ENCODE measurements at regions of chr4 and their contacts with region 1.

Region 1: GRCh38 chr4:4430492-4431197 is 43.7 kb downstream of the NSG1 start:
- DNase-seq: peak; percentile 92
- ATAC-seq: peak; percentile 97
- H3K4me3 ChIP-seq: no peak overlapping the region
- H3K27ac ChIP-seq: no peak overlapping the region
- H3K4me1 ChIP-seq: peaks cover 4% of the 10 kb centered on the region; the same call in 1 of the 2 replicates
- H3K27me3 ChIP-seq: no peaks in the 10 kb centered on the region
- CTCF ChIP-seq: peak; percentile 70
- POLR2A ChIP-seq: no peak
- RAD21 ChIP-seq: peak; percentile 63

Region 2: DNA sequence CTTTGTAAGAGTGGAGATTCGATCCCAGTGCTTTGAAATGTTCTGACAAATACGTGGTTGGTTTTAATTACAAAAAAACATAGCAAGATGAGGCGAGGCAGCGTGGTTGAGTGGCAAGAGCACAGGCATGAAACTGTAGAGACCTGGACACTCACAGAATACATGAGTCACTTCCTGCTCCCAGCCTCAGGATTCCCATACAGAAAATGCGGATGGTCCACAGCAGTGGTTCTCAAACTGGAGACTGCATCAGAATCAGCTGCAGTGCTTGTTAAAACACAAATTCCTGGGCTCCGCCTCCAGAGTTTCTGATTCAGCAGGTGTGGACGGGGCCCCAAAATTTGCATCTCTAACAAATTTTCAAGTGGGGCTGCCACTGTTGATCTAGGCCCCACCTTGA is 214.0 kb before region 1 on chr4:
- CTCF ChIA-PET with region 1: no interaction called
- POLR2A ChIA-PET with region 1: no interaction called
- dilution Hi-C with region 1: no loop called
- in situ Hi-C with region 1: no loop called
- intact Hi-C with region 1: no loop called
- DNase-seq: peak; percentile 59
- ATAC-seq: no peak
- H3K4me3 ChIP-seq: no peak overlapping the region
- H3K27ac ChIP-seq: no peak overlapping the region
- H3K4me1 ChIP-seq: 0 out of 2 replicates have a peak, but pooled peaks cover 2% of the 10 kb centered on the region
- H3K27me3 ChIP-seq: peaks cover 4% of the 10 kb centered on the region; the same call in 1 of the 2 replicates
- CTCF ChIP-seq: no peak
- POLR2A ChIP-seq: no peak
- RAD21 ChIP-seq: no peak

Region 3: DNA sequence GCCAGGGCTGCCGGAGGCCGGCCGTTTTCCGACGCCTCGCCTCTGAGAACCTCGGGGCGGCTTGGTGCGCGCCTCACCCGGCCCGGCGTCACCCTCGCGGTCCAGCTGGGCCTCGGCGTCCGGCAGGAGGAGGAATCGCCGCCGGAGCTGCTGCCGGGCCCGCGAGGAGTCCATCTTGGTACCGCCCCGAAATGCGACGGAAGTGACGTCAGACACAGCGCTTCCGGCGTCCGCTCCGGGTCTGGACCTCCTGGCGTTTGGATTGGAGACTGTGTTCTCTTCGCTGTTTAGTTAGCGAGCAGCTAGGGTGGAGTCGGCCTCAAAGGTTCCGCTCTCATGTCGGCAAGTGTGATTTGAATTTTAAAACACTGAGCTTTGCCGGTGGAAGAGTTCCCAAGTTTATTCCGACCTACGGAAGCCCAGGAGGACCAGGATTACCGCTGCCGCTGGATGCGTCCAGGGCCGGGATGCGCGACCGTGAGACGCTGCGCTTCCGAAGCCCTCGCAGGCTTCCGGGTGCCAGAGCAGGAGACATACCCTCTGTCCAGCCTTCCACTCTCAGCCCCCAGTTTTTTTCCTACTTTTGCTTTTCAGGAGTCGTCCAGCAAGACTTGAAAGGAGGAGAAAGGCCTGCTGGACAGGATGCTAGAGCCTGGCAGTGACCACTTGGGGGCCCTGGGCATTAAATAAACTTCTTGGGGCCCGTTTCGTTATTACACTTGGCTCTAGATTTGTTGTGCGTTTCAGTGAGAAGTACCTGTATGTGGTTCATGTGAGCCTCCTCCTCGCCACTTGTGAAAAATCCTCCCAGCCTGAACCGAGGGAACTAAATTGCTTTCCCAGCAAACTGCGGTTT is 182.4 kb before region 1 on chr4 and contains the start of gene TMEM128:
- CTCF ChIA-PET with region 1: interaction called, 3 read pairs
- POLR2A ChIA-PET with region 1: no interaction called
- dilution Hi-C with region 1: no loop called
- in situ Hi-C with region 1: no loop called
- intact Hi-C with region 1: loop called (anchors 1 kb)
- DNase-seq: peak; percentile 93
- ATAC-seq: peak; percentile 95
- H3K4me3 ChIP-seq: peak within 1 kb of the TSS; percentile 90
- H3K27ac ChIP-seq: peak within 1 kb of the TSS; percentile 96
- H3K4me1 ChIP-seq: peaks cover 2% of the 10 kb centered on the region; the same call in 1 of the 2 replicates
- H3K27me3 ChIP-seq: no peaks in the 10 kb centered on the region
- CTCF ChIP-seq: 0 out of 2 replicates have a peak, but pooled peaks have one; percentile 7
- POLR2A ChIP-seq: peak; percentile 92
- RAD21 ChIP-seq: no peak
- total RNA-seq, gene TMEM128: 21.9 and 27.2 TPM in 2 replicates

Region 4: GRCh38 chr4:4260253-4260652 is 170.4 kb before region 1 on chr4:
- CTCF ChIA-PET with region 1: interaction called, 4 read pairs
- POLR2A ChIA-PET with region 1: no interaction called
- dilution Hi-C with region 1: no loop called
- in situ Hi-C with region 1: no loop called
- intact Hi-C with region 1: loop called (anchors 2 kb)
- DNase-seq: peak; percentile 63
- ATAC-seq: peak; percentile 94
- H3K4me3 ChIP-seq: no peak overlapping the region
- H3K27ac ChIP-seq: no peak overlapping the region
- H3K4me1 ChIP-seq: peaks cover 1% of the 10 kb centered on the region; the same call in 1 of the 2 replicates
- H3K27me3 ChIP-seq: peaks cover 16% of the 10 kb centered on the region
- CTCF ChIP-seq: peak; percentile 59
- POLR2A ChIP-seq: no peak
- RAD21 ChIP-seq: peak; percentile 60

Region 5: GRCh38 chr4:4296283-4296846 is 134.3 kb before region 1 on chr4:
- CTCF ChIA-PET with region 1: no interaction called
- POLR2A ChIA-PET with region 1: no interaction called
- dilution Hi-C with region 1: no loop called
- in situ Hi-C with region 1: no loop called
- intact Hi-C with region 1: no loop called
- DNase-seq: no peak
- ATAC-seq: no peak
- H3K4me3 ChIP-seq: no peak overlapping the region
- H3K27ac ChIP-seq: no peak overlapping the region
- H3K4me1 ChIP-seq: no peaks in the 10 kb centered on the region
- H3K27me3 ChIP-seq: no peaks in the 10 kb centered on the region
- CTCF ChIP-seq: no peak
- POLR2A ChIP-seq: no peak
- RAD21 ChIP-seq: no peak

Region 6: GRCh38 chr4:4395849-4396637 is 34.6 kb before region 1 on chr4:
- CTCF ChIA-PET with region 1: interaction called, 3 read pairs
- POLR2A ChIA-PET with region 1: no interaction called
- dilution Hi-C with region 1: no loop called
- in situ Hi-C with region 1: no loop called
- intact Hi-C with region 1: loop called (anchors 2 kb)
- DNase-seq: peak; percentile 53
- ATAC-seq: peak; percentile 72
- H3K4me3 ChIP-seq: no peak overlapping the region
- H3K27ac ChIP-seq: peak overlapping the region; percentile 74
- H3K4me1 ChIP-seq: peaks cover 29% of the 10 kb centered on the region
- H3K27me3 ChIP-seq: peaks cover 30% of the 10 kb centered on the region
- CTCF ChIP-seq: 0 out of 2 replicates have a peak, but pooled peaks have one; percentile 14
- POLR2A ChIP-seq: no peak
- RAD21 ChIP-seq: no peak

Region 7: GRCh38 chr4:4694296-4694772 is 263.7 kb after region 1 on chr4:
- CTCF ChIA-PET with region 1: no interaction called
- POLR2A ChIA-PET with region 1: no interaction called
- dilution Hi-C with region 1: no loop called
- in situ Hi-C with region 1: no loop called
- intact Hi-C with region 1: no loop called
- DNase-seq: peak; percentile 23
- ATAC-seq: peak; percentile 78
- H3K4me3 ChIP-seq: no peak overlapping the region
- H3K27ac ChIP-seq: no peak overlapping the region
- H3K4me1 ChIP-seq: no peaks in the 10 kb centered on the region
- H3K27me3 ChIP-seq: peaks cover 13% of the 10 kb centered on the region
- CTCF ChIP-seq: peak; percentile 31; the same call in 1 of the 2 replicates
- POLR2A ChIP-seq: no peak
- RAD21 ChIP-seq: peak; percentile 27